ENCODE measurements at regions of chr14 and their contacts with region 1.

Region 1: DNA sequence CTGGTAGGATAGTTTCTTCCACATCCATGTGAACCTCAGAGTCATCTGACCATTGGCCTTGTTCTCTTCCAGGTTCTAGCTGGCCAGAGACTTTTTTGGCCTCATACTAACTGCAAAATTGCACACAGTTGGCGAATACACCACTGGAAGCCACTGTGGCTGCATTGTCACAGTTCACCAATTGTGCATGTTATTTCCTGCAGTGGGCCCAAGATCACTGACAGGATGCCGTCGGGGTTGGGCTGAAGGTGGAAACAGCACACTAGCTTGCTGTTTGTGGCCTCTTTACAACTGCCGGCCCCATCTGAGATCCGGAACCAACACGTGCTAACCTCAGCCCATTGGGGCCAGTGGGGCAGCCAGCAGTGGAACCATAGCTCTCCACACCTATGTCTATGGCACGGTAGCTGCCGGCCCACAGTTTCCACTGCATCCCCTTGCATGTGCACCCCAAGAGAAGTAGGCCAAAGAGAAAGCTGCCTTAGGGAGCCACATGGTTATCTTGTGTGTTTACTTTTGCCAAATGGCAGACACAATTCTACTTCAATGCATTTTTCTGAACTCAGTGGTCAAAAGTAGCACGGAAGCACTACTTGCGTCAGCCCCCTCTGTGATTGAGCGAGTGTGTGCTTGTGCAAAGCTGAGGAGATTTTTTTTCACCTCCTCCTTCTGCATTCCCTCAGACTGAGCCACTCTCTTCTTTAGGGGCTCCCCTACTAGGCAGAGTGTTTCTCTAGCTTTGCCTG is 464.0 kb downstream of the RAD51B start:
- DNase-seq: peak; percentile 70
- ATAC-seq: peak; percentile 85
- H3K4me3 Mint-ChIP-seq: peak overlapping the region; percentile 44
- H3K27ac Mint-ChIP-seq: peak overlapping the region; percentile 98
- H3K4me1 Mint-ChIP-seq: peaks cover 46% of the 10 kb centered on the region
- H3K27me3 Mint-ChIP-seq: no peaks in the 10 kb centered on the region

Region 2: DNA sequence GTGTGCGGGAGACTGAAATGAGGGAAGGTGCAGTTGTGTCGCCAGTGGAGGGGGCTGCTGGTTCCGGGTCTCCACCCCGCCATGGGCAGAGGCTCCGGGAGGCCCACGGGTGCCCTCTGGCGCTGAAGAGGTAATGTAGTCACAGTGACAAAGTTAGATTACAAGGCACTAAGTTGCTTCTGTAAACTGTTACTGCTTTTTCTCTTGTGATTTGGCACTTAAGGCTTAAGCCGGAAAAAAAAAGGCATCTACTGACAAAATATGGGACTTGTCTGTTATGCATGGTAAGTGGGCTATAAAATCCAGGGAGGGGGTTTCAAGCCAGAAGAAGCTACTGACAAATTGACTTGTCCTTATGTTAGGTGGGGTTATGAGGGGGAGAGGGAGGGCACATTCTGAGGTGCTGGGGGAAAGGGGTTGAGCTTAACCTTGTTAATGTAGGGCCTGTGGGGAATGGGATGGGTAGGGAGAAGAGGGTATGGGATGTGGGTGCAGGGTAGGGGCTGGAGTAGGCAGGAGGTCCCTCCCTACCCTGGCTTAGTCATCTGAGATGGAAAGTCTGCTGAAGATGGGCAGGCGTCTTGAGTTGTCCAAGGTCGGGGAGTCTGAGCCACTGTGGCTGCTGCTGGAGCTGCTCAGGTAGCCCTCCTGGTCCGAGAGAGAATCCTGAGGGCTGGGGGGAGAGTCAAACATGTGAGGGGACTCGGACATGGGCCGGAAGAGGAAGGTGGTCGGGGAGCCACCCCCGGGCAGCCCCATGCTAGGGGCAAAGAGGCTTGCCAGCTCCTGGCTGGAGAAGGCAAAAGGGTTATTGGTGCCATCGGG is 505.7 kb after region 1 on chr14:
- POLR2A ChIA-PET with region 1: interaction called, 19 read pairs
- DNase-seq: peak; percentile 86
- ATAC-seq: peak; percentile 37
- H3K4me3 Mint-ChIP-seq: peak overlapping the region; percentile 89
- H3K27ac Mint-ChIP-seq: peak overlapping the region; percentile 100
- H3K4me1 Mint-ChIP-seq: peaks cover 58% of the 10 kb centered on the region
- H3K27me3 Mint-ChIP-seq: no peaks in the 10 kb centered on the region

Region 3: DNA sequence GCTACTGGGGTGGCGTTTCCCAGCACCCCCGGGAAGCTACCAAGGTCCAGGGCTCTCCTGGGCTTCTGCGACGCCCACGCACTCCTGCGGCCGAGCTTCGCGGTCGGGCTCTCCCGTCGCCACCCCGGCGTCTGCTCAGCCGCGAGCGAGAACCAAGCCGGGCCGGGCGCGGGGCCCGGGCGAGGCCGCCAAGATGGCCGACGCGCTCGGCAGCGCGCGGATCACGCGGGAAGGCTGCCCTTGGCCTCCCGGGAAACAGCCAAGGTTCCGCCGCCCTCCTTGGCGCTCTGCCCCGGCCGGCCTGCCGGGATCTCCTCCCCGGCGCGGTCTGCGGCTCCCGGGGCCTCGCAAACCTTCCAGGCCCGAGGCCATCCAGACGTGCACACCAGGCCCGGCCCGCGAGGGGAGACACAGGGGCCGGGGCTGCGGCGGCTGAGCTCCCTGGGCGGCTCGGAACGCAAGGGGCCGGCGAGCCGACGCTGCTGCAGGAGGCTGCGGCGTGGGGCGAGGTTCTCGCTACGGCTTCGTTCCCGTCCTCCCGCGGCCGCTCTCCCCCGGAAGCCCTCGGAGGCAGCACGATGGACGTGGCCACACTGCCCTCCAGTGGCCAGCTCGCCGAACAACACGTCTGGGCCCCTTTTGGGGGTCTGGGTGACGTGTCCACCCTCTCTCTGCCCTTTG is 532.9 kb after region 1 on chr14:
- POLR2A ChIA-PET with region 1: interaction called, 20 read pairs
- DNase-seq: peak; percentile 93
- ATAC-seq: peak; percentile 83
- H3K4me3 Mint-ChIP-seq: peak overlapping the region; percentile 84
- H3K27ac Mint-ChIP-seq: peak overlapping the region; percentile 89
- H3K4me1 Mint-ChIP-seq: peaks cover 47% of the 10 kb centered on the region
- H3K27me3 Mint-ChIP-seq: no peaks in the 10 kb centered on the region

Measured in activated naive CD8-positive, alpha-beta T cell treated with anti-CD3 and anti-CD28 coated beads, Interleukin-2, amount 10 ng/mL, durations not matched to agents 7 days and 5 days (primary cell).